ENCODE measurements at regions of chrX and their contacts with region 1.

Region 1: GRCh38 chrX:21708116-21708515 is 49.8 kb downstream of the SMPX start:
- DNase-seq: no peak
- ATAC-seq: no peak; the same call in 2 of the 3 replicates
- H3K4me3 ChIP-seq: no peak overlapping the region
- H3K27ac ChIP-seq: no peak overlapping the region
- H3K4me1 ChIP-seq: peaks cover 7% of the 10 kb centered on the region; the same call in 1 of the 2 replicates
- H3K27me3 ChIP-seq: no peaks in the 10 kb centered on the region
- CTCF ChIP-seq: peak; percentile 39
- EP300 ChIP-seq: no peak
- POLR2A ChIP-seq: no peak
- RAD21 ChIP-seq: no peak

Region 2: GRCh38 chrX:21612154-21612553 is 96.0 kb before region 1 on chrX:
- CTCF ChIA-PET with region 1: no interaction called
- POLR2A ChIA-PET with region 1: no interaction called
- in situ Hi-C with region 1: no loop called
- intact Hi-C with region 1: loop called (anchors 10 kb)
- DNase-seq: peak; percentile 9
- ATAC-seq: peak; percentile 88
- H3K4me3 ChIP-seq: no peak overlapping the region
- H3K27ac ChIP-seq: no peak overlapping the region
- H3K4me1 ChIP-seq: peaks cover 5% of the 10 kb centered on the region; the same call in 1 of the 2 replicates
- H3K27me3 ChIP-seq: no peaks in the 10 kb centered on the region
- CTCF ChIP-seq: no peak
- EP300 ChIP-seq: no peak
- POLR2A ChIP-seq: no peak
- RAD21 ChIP-seq: no peak

Region 3: DNA sequence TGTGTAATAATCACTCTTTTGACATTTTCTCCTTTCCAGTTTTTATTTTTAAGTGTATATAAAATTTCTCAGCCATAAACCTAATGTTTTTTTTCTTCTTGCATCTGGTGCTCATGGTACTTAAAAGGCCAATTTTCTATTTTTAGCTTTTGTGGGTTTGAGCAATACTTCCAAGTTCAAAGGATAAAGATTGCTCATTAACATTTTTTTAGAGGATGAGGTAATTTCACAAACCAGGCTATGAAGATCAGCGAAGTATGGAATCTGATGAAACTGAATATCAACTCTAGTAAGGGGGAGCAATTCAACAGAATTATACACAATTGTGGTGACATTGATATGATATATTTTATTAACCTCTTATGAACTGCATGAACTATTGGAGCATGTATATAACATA is 24.2 kb before region 1 on chrX:
- CTCF ChIA-PET with region 1: no interaction called
- POLR2A ChIA-PET with region 1: no interaction called
- in situ Hi-C with region 1: no loop called
- intact Hi-C with region 1: no loop called
- DNase-seq: no peak
- ATAC-seq: no peak
- H3K4me3 ChIP-seq: no peak overlapping the region
- H3K27ac ChIP-seq: no peak overlapping the region
- H3K4me1 ChIP-seq: no peaks in the 10 kb centered on the region
- H3K27me3 ChIP-seq: no peaks in the 10 kb centered on the region
- CTCF ChIP-seq: no peak
- EP300 ChIP-seq: no peak
- POLR2A ChIP-seq: no peak
- RAD21 ChIP-seq: no peak

Region 4: GRCh38 chrX:21725496-21725895 is 17.4 kb after region 1 on chrX:
- CTCF ChIA-PET with region 1: no interaction called
- POLR2A ChIA-PET with region 1: no interaction called
- in situ Hi-C with region 1: no loop called
- intact Hi-C with region 1: no loop called
- DNase-seq: peak; percentile 27
- ATAC-seq: peak; percentile 56; the same call in 2 of the 3 replicates
- H3K4me3 ChIP-seq: no peak overlapping the region
- H3K27ac ChIP-seq: no peak overlapping the region
- H3K4me1 ChIP-seq: peaks cover 37% of the 10 kb centered on the region
- H3K27me3 ChIP-seq: no peaks in the 10 kb centered on the region
- CTCF ChIP-seq: peak; percentile 65
- EP300 ChIP-seq: no peak
- POLR2A ChIP-seq: no peak
- RAD21 ChIP-seq: no peak

Region 5: GRCh38 chrX:21745756-21746155 is 37.6 kb after region 1 on chrX:
- CTCF ChIA-PET with region 1: interaction called, 3 read pairs
- POLR2A ChIA-PET with region 1: no interaction called
- in situ Hi-C with region 1: no loop called
- intact Hi-C with region 1: loop called (anchors 5 kb)
- DNase-seq: no peak
- ATAC-seq: peak; percentile 38; the same call in 2 of the 3 replicates
- H3K4me3 ChIP-seq: no peak overlapping the region
- H3K27ac ChIP-seq: no peak overlapping the region
- H3K4me1 ChIP-seq: peaks cover 26% of the 10 kb centered on the region
- H3K27me3 ChIP-seq: no peaks in the 10 kb centered on the region
- CTCF ChIP-seq: peak; percentile 54
- EP300 ChIP-seq: no peak
- POLR2A ChIP-seq: no peak
- RAD21 ChIP-seq: no peak

Region 6: GRCh38 chrX:21781525-21781924 is 73.4 kb after region 1 on chrX:
- CTCF ChIA-PET with region 1: no interaction called
- POLR2A ChIA-PET with region 1: no interaction called
- in situ Hi-C with region 1: no loop called
- intact Hi-C with region 1: no loop called
- DNase-seq: no peak
- ATAC-seq: no peak
- H3K4me3 ChIP-seq: no peak overlapping the region
- H3K27ac ChIP-seq: no peak overlapping the region
- H3K4me1 ChIP-seq: no peaks in the 10 kb centered on the region
- H3K27me3 ChIP-seq: no peaks in the 10 kb centered on the region
- CTCF ChIP-seq: no peak
- EP300 ChIP-seq: no peak
- POLR2A ChIP-seq: no peak
- RAD21 ChIP-seq: no peak